ENCODE measurements at regions of chr22 and their contacts with region 1.

Region 1: DNA sequence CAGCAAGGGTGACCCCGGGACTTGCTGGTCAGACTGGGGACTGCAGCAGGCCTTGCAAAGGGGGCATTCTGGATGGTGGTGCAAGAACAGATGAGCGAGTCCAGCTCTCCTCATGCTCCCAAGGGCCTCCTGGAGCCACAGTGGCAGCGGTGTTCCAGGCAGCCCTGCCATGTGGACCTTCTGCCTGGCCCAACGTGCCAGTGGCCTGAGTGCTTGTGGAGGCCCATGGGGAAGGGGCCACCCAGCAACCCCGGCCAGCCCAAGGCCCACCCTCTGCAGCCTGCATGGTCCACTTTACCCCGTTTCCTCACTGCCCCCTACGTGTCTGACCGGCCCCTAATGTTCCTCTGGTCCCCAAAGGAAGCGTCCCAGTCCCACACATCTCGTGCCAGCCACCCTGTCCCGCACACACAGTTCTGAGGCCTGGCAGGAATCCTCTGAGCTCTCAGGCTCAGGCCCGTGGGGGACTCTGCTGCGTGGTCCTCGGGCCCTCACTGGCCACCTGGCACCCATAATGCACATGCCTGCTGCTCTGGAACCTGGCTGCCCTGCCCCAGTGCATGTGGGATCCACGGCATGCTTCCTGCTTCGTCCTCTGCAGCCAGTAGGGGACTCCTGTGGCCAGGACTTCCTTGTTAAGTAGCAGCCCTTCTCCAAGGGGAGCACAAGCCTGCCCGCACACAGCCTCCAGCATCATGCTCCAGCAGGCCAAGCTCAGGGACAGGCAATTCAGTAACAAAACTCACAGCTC is 85.5 kb downstream of the DGCR2 start:
- DNase-seq: no peak
- H3K4me3 ChIP-seq: no peak overlapping the region
- H3K27ac ChIP-seq: no peak overlapping the region
- H3K4me1 ChIP-seq: no peaks in the 10 kb centered on the region
- H3K27me3 ChIP-seq: peaks cover 0 to 2% (median 0%) of the 10 kb centered on the region in 5 experiments

Region 2: GRCh38 chr22:19046719-19047609 is 10.3 kb after region 1 on chr22:
- CTCF ChIA-PET with region 1: interaction called, 14 read pairs
- POLR2A ChIA-PET with region 1: no interaction called
- DNase-seq: no peak
- H3K4me3 ChIP-seq: no peak overlapping the region
- H3K27ac ChIP-seq: no peak overlapping the region
- H3K4me1 ChIP-seq: no peaks in the 10 kb centered on the region
- H3K27me3 ChIP-seq: no peaks in the 10 kb centered on the region

Measured in common myeloid progenitor, CD34-positive (primary cell).